Breast epithelium (tissue), 4 donors: ENCODE measurements at regions of chr5 and their contacts with region 1.

Region 1: DNA sequence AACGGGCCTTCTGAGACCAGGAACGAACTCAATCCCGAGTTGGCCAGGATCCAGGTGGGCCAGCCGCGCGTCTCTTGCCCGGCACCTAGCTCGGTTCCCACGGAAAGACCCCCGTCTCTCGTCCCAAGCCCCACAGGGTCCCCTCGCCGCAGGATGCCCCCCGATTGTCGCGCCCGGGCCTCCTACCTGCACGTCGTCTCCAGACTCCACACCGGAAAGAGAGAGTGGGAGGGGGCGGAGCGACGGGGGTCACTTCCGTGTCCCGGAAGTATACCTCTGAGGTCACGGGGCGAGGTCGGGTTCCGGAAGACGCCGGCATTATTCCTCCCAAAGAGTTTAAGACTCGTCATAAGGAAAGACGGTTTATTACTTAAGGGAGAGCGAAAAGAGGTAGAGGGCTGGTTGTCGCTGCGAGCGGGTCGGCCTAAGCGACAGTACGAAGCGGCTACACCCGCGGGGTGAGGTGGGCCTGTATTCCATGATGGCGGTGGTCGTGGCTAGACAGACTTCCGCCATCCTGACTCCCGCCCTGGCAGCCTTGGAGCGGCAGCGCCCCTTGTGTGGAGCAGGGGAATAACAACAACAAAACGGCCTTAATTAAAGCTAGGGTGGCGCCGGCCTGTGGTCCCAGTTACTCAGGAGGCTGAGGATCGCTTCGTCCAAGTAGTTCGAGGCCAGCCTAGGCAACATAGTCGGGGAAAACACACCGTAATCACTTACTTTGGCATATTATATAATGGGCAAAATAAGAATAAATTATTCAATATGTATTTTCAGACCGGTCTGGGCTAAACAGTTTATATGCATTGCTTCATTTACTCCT is at the start of gene RPS14:
- DNase-seq: peak; percentile 94 to 96
- H3K4me3 ChIP-seq: peak within 1 kb of the TSS; percentile 76 to 85 (median 82)
- H3K27ac ChIP-seq: peak within 1 kb of the TSS; percentile 95 to 98
- H3K4me1 ChIP-seq: peaks cover 10 to 13% of the 10 kb centered on the region in 2 donors
- H3K27me3 ChIP-seq: no peaks in the 10 kb centered on the region
- CTCF ChIP-seq: peak; percentile 92 to 96 (median 94)
- POLR2A ChIP-seq: peak; percentile 81
- total RNA-seq, gene RPS14: 3,271 to 4,472 (median 4,011) TPM

Region 2: DNA sequence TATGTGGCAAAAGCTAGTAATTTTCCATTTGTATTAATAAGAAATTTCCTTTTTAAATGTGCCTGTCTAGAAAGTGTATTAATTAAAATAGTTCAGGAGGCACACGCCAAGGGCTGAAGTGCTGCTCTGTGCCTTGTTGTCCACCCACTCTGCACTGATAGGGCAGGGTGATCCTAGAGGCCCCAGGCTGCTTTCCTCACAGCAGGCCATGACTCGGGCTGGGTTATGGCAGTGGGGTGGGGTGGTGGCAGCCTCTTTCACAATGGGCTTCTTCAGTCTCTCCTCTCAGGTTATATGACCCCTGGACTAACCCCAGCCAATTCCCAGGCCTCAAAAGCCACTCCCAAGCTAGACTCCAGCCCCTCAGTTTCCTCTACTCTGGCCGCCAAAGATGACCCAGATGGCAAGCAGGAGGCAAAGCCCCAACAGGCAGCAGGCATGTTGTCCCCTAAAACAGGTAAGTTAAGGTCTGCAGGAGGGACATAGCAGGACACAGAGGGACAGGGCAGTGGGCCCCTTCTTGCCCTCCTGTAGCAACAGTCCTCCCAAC is 56.6 kb before region 1 on chr5:
- intact Hi-C with region 1: loop called (anchors 2 kb)
- DNase-seq: no peak
- H3K4me3 ChIP-seq: no peak overlapping the region
- H3K27ac ChIP-seq: no peak overlapping the region
- H3K4me1 ChIP-seq: no peaks in the 10 kb centered on the region
- H3K27me3 ChIP-seq: no peaks in the 10 kb centered on the region
- CTCF ChIP-seq: no peak
- POLR2A ChIP-seq: no peak

Region 3: GRCh38 chr5:150401076-150401375 is 48.7 kb before region 1 on chr5:
- intact Hi-C with region 1: loop called (anchors 1 kb)
- DNase-seq: no peak
- H3K4me3 ChIP-seq: no peak overlapping the region
- H3K27ac ChIP-seq: no peak overlapping the region
- H3K4me1 ChIP-seq: no peaks in the 10 kb centered on the region
- H3K27me3 ChIP-seq: no peaks in the 10 kb centered on the region
- CTCF ChIP-seq: no peak
- POLR2A ChIP-seq: no peak

Region 4: DNA sequence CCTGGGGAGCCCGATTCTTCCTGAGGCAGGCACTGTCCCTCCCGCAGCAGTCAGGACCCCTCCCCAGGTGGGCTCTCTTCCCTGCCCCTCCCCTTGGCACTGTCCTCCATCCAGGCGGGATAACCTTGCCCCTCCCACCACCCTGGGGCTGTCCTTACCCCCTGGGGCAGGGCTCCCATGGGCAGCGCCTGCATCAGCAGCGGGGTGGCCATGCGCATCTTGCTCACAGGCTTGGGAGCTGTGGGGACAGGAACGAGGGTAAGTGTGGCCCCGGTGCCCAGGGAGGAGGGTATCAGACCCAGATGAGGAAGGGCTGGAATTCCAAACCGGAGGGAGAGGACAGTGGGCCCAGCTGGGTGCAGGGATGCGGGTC is 43.0 kb before region 1 on chr5:
- intact Hi-C with region 1: loop called (anchors 1 kb)
- DNase-seq: no peak
- H3K4me3 ChIP-seq: no peak overlapping the region
- H3K27ac ChIP-seq: no peak overlapping the region
- H3K4me1 ChIP-seq: peaks cover 0 to 6% of the 10 kb centered on the region in 2 donors
- H3K27me3 ChIP-seq: no peaks in the 10 kb centered on the region
- CTCF ChIP-seq: no peak
- POLR2A ChIP-seq: no peak

Region 5: GRCh38 chr5:150436141-150436680 is 13.5 kb before region 1 on chr5:
- intact Hi-C with region 1: no loop called
- DNase-seq: peak; percentile 83 to 84
- H3K4me3 ChIP-seq: no peak overlapping the region
- H3K27ac ChIP-seq: no peak overlapping the region
- H3K4me1 ChIP-seq: no peaks in the 10 kb centered on the region
- H3K27me3 ChIP-seq: no peaks in the 10 kb centered on the region
- CTCF ChIP-seq: peak; percentile 75 to 87 (median 82)
- POLR2A ChIP-seq: no peak